ENCODE measurements at regions of chr1 and their contacts with region 1.

Region 1: DNA sequence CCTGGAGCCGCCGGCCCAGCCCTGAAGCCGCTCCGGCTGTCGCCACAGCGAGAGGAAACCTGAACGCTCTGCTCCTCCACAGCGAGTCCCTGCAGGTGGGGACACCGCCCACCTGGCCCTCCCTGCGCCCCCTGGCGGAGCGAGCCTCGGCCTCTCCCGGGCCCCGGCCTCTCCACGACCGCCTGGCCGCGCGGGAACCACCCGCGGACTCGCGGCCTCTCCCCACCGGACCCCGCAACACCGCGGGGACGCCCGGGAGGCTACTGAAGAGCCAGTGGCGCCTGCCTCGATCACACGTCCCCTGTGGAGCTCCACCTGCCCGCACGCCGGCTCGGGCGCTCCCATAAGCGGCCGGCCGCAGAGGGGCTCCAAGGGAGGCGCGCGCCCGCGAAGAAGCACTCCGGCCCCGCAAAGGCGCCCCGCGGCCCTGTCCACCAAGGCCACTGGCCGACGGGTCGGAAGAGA is 109.6 kb downstream of the KCNN3 start:
- DNase-seq: peak; percentile 84
- ATAC-seq: peak; percentile 95
- H3K4me3 Mint-ChIP-seq: peak overlapping the region; percentile 34
- H3K27ac Mint-ChIP-seq: no peak overlapping the region
- H3K4me1 Mint-ChIP-seq: peaks cover 39% of the 10 kb centered on the region
- H3K27me3 Mint-ChIP-seq: peaks cover 44% of the 10 kb centered on the region

Region 2: DNA sequence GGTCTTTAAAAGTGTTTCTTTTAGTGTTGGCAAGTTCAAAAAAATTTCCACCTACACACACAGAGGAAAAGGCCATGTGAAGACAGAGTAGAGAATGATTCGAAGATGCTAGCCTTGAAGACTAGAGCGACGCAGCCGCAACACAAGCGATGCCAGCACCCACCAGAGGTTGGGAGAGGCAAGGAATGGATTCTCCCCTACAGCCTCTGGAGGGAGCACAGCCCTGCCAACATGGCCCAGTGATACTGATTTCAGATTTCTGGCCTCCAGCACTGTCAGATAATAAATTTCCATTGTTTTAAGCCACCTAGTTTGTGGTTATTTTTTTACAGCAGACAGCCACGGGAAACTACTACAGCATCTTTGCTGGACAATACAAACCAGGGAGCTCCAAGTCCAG is 145.6 kb before region 1 on chr1:
- CTCF ChIA-PET with region 1: no interaction called
- DNase-seq: no peak
- ATAC-seq: no peak
- H3K4me3 Mint-ChIP-seq: no peak overlapping the region
- H3K27ac Mint-ChIP-seq: peak overlapping the region; percentile 45
- H3K4me1 Mint-ChIP-seq: peaks cover 57% of the 10 kb centered on the region
- H3K27me3 Mint-ChIP-seq: no peaks in the 10 kb centered on the region

Region 3: DNA sequence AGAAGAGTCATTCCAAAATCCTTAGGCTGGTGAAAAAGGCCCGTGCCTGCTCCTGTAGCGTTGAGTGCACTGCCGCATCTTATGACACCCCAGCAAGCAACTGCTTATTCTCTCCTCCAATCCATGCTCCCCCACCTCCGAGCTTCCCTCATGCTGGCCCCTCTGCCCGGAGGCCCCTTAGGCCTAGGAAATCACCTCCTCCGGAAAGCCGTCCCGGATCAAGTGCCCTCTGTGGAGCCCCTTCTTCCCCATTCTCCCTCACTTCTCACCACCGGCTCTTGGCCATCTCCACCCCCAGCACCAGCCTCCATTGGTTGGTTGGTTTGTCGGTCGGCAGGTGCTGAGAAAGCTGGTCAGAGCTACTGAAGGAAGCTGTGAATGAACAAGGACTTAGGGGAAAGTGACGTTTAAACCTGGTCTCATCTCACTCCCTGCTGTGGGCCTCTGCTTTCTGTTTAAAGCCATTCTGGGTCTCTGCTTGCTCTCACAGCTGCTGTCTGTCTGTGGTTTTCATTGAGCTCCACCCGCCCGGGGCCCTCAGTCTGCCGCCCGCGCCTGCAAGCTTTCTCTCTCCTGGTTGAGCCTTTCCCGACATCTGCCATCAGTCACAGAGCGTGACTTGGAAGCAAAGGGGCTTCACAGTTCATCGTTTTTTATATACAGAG is 12.6 kb before region 1 on chr1:
- CTCF ChIA-PET with region 1: interaction called, 29 read pairs
- DNase-seq: peak; percentile 82
- ATAC-seq: peak; percentile 81
- H3K4me3 Mint-ChIP-seq: peak overlapping the region; percentile 46
- H3K27ac Mint-ChIP-seq: peak overlapping the region; percentile 76
- H3K4me1 Mint-ChIP-seq: peaks cover 54% of the 10 kb centered on the region
- H3K27me3 Mint-ChIP-seq: peaks cover 81% of the 10 kb centered on the region

Region 4: DNA sequence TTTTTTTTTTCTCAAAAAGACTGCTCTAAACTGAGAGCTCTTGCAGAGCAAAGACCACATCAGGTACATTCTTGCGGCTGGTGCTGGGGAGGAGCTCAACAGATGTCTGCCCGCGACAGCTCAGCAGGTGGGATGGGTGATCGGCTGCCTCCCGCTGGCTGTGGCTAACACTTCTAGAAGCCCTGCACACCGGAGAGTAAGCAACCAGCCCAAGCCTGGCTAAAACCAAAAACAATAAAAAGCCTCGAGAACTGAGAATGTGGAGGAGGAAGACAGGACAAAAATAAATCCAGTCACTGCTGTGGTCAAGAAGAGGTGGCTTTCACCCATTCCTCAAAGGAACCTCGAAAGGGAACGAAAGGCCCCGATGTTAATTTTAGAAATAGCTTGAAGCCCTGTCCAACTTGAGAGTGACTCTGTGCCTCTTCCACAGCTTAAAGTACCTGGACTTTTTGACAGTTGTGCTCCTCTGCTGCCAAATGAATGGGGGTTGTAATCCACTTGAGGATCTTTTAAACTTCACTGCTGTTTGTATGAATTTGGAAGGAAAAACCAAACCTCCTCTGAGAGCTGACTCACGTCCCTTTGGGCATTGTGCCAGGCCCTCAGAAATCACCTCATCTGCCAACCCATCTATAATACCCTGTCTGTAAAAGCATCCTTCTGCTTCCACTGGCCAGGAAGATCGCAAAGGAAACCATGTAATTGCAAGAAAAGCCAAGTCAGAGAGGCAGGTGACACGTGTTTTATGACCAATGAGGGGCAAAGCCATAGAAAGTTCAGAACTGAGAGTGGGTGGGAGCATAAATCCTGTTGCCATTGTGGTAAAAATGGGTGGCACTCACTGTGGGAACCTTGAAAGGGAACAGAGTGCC is 31.0 kb after region 1 on chr1:
- CTCF ChIA-PET with region 1: interaction called, 17 read pairs
- DNase-seq: peak; percentile 93
- ATAC-seq: peak; percentile 96
- H3K4me3 Mint-ChIP-seq: peak overlapping the region; percentile 25
- H3K27ac Mint-ChIP-seq: peak overlapping the region; percentile 80
- H3K4me1 Mint-ChIP-seq: peaks cover 32% of the 10 kb centered on the region
- H3K27me3 Mint-ChIP-seq: peaks cover 35% of the 10 kb centered on the region

Measured in activated CD8-positive, alpha-beta memory T cell treated with anti-CD3 and anti-CD28 coated beads, Interleukin-2, amount 10 ng/mL, durations not matched to agents 7 days and 5 days (primary cell).